ENCODE measurements at regions of chr9 and their contacts with region 1.

Region 1: GRCh38 chr9:120767456-120768167 is 25.6 kb downstream of the FBXW2 start:
- DNase-seq: peak; percentile 11
- ATAC-seq: no peak
- H3K4me3 ChIP-seq: no peak overlapping the region
- H3K27ac ChIP-seq: peak overlapping the region; percentile 25
- H3K4me1 ChIP-seq: peaks cover 48% of the 10 kb centered on the region
- H3K27me3 ChIP-seq: no peaks in the 10 kb centered on the region
- CTCF ChIP-seq: no peak
- EP300 ChIP-seq: no peak
- POLR2A ChIP-seq: no peak
- RAD21 ChIP-seq: no peak

Region 2: DNA sequence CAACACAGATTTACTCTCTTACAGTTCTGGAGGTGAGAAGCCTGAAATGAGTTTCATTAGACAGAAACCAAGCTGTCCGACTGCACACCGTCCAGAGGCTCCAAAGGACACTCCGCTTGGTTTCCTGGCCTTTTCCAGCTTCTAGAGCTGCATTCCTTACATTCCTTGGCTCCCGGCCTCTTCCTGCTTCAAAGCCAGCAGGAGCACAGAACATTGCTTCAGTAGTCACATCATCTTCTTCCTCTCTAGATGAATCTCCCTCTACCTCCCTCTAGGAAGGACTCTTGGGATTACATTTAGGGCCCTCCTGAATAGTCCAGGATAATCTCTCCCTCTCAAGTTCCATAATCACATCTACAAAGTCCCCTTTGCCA is 401.0 kb before region 1 on chr9:
- CTCF ChIA-PET with region 1: no interaction called
- POLR2A ChIA-PET with region 1: no interaction called
- in situ Hi-C with region 1: no loop called
- intact Hi-C with region 1: no loop called
- DNase-seq: peak; percentile 88
- ATAC-seq: peak; percentile 96
- H3K4me3 ChIP-seq: peak overlapping the region; percentile 3 to 27 (median 5); a peak in 1 of 6 replicates
- H3K27ac ChIP-seq: peak overlapping the region; percentile 47
- H3K4me1 ChIP-seq: peaks cover 29% of the 10 kb centered on the region
- H3K27me3 ChIP-seq: no peaks in the 10 kb centered on the region
- CTCF ChIP-seq: peak; percentile 35; the same call in 1 of the 2 replicates
- EP300 ChIP-seq: peak in 1 of 2 experiments; percentile 52; a peak in 2 of 4 replicates
- POLR2A ChIP-seq: peak in 1 of 2 experiments; percentile 41; a peak in 1 of 4 replicates
- RAD21 ChIP-seq: peak; percentile 38

Region 3: DNA sequence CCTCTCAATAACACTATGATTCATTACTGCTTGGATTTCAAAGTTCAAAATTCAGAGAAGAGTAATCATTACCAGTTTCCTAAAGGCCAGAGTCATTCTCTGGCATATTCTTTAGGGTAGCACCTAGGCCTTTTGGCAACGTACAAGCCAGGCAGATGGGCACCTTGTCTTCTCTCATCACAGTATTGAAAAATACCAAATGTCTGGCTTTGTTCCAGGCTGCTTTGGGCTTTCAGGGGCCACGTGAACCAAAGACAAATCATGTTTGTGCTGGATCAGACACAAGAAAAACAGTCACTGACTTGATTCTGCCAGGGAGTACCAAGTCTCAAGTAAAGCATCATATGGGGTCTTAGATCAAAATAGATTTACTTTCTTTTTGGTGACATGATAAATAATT is 68.8 kb before region 1 on chr9:
- CTCF ChIA-PET with region 1: no interaction called
- POLR2A ChIA-PET with region 1: no interaction called
- in situ Hi-C with region 1: no loop called
- intact Hi-C with region 1: no loop called
- DNase-seq: no peak
- ATAC-seq: no peak
- H3K4me3 ChIP-seq: no peak overlapping the region
- H3K27ac ChIP-seq: no peak overlapping the region
- H3K4me1 ChIP-seq: peaks cover 37% of the 10 kb centered on the region
- H3K27me3 ChIP-seq: no peaks in the 10 kb centered on the region
- CTCF ChIP-seq: no peak
- EP300 ChIP-seq: no peak
- POLR2A ChIP-seq: no peak
- RAD21 ChIP-seq: no peak

Region 4: GRCh38 chr9:120783602-120784047 is 16.0 kb after region 1 on chr9:
- CTCF ChIA-PET with region 1: no interaction called
- POLR2A ChIA-PET with region 1: interaction called, 76 read pairs
- in situ Hi-C with region 1: no loop called
- intact Hi-C with region 1: no loop called
- DNase-seq: peak; percentile 87
- ATAC-seq: peak; percentile 67
- H3K4me3 ChIP-seq: no peak overlapping the region
- H3K27ac ChIP-seq: peak overlapping the region; percentile 72
- H3K4me1 ChIP-seq: peaks cover 73% of the 10 kb centered on the region
- H3K27me3 ChIP-seq: no peaks in the 10 kb centered on the region
- CTCF ChIP-seq: no peak
- EP300 ChIP-seq: no peak; a peak in 2 of 4 replicates
- POLR2A ChIP-seq: no peak
- RAD21 ChIP-seq: no peak

Region 5: DNA sequence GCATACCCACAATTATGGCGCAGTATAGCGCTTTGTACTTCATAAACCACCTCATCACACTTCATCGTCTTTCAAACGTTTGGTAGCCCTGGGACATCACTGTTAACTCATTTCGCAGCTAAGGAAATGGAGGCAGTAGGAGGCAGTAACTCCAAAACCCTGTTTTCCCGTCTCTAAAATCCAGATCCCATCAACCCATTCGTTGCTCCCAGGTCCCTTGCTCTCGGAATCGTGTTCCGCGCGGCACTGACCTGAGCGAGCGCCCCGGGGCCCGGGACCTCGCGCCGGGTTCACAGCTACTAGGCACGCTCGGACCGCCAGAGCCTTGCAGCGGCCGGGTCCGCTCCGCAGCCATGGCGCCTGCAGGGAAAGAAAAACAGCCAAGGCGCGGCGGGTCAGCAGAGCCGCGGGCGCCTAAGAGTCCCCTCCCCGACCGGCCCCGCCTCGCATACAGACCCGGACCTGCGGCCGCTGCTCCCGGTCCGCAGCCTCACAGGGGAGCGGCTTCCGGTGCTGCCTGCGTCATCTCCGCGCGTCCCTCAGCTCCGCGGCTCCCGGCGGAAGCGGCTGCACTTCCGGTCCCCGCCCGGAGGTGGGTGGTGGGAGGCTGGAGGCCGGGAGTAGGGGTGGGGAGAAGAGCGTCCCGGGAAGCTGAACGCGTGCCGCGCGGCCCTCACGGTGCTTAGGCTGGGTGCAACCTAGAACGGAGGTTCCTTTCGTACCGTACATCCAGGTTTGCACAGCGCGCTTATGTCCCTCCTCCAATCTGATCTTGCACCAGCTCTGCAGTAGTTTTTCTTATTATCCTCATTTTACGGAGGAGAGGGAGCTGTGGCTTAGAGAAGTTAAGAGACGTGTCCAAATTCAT is 25.5 kb after region 1 on chr9 and contains the start of gene FBXW2:
- CTCF ChIA-PET with region 1: no interaction called
- POLR2A ChIA-PET with region 1: interaction called, 52 read pairs
- in situ Hi-C with region 1: no loop called
- intact Hi-C with region 1: no loop called
- DNase-seq: peak; percentile 87
- ATAC-seq: peak; percentile 98
- H3K4me3 ChIP-seq: peak within 1 kb of the TSS; percentile 81 to 87 (median 84)
- H3K27ac ChIP-seq: peak within 1 kb of the TSS; percentile 90
- H3K4me1 ChIP-seq: peaks cover 53% of the 10 kb centered on the region
- H3K27me3 ChIP-seq: no peaks in the 10 kb centered on the region; a peak in 1 of 5 replicates
- CTCF ChIP-seq: peak; percentile 23; the same call in 1 of the 2 replicates
- EP300 ChIP-seq: no peak
- POLR2A ChIP-seq: peak; percentile 95 to 97
- RAD21 ChIP-seq: peak; percentile 63
- total RNA-seq, gene FBXW2: 43.1 and 55.2 TPM in 2 replicates

Region 6: DNA sequence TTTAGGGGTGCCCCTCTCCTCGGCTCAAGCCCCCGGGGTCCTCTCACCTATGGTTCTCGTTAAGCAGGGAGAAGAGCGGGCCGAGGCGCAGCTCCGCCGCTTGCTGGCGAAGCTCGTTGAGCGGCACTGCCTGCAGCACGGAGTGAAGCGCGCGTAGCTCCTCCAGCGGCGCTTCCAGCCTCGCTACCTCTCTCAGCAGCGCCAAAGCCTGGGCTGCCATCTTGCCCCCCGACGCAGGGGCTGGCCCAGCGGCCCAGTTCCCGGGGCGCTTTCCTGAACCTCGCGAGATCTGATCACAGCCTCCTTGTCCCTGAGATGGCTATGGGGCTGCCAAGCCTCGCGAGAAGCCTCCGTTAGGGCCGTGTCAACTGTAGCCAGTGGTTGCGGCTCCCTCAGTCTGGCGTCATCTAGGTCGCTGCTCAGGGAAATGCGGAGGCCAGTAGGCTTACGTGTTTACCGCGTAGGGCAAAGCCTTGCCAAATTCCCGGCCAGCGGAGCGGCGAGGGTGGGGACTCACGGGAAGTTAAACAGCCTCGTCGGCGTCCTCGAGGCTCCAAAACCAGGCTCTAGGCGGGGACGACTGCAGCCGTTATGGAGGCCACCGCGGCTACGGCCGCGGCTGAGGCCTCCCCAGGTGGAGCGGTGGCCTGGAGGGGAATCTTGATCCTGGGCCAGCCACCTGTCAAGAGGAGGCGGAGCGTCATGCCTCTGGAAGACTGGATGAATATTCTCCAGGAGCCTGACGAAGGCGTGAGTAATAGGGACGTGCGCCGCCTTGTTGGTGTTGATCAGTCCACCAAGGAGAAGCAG is 75.3 kb after region 1 on chr9 and contains the start of gene PSMD5:
- CTCF ChIA-PET with region 1: no interaction called
- POLR2A ChIA-PET with region 1: interaction called, 3 read pairs
- in situ Hi-C with region 1: no loop called
- intact Hi-C with region 1: loop called (anchors 2 kb)
- DNase-seq: peak; percentile 94
- ATAC-seq: peak; percentile 96
- H3K4me3 ChIP-seq: peak within 1 kb of the TSS; percentile 73 to 91 (median 87)
- H3K27ac ChIP-seq: peak within 1 kb of the TSS; percentile 82
- H3K4me1 ChIP-seq: peaks cover 30% of the 10 kb centered on the region
- H3K27me3 ChIP-seq: peaks cover 0 to 3% of the 10 kb centered on the region in 2 experiments; a peak in 1 of 5 replicates
- CTCF ChIP-seq: peak; percentile 48
- EP300 ChIP-seq: no peak
- POLR2A ChIP-seq: peak; percentile 86 to 89
- RAD21 ChIP-seq: peak; percentile 8; the same call in 1 of the 2 replicates
- total RNA-seq, gene PSMD5: 18.1 and 32.6 TPM in 2 replicates

Region 7: GRCh38 chr9:121447321-121447834 is 679.8 kb after region 1 on chr9:
- CTCF ChIA-PET with region 1: no interaction called
- POLR2A ChIA-PET with region 1: no interaction called
- in situ Hi-C with region 1: no loop called
- intact Hi-C with region 1: no loop called
- DNase-seq: no peak
- ATAC-seq: no peak
- H3K4me3 ChIP-seq: no peak overlapping the region
- H3K27ac ChIP-seq: no peak overlapping the region
- H3K4me1 ChIP-seq: no peaks in the 10 kb centered on the region
- H3K27me3 ChIP-seq: peaks cover 0 to 35% of the 10 kb centered on the region in 2 experiments; a peak in 1 of 5 replicates
- CTCF ChIP-seq: no peak
- EP300 ChIP-seq: no peak
- POLR2A ChIP-seq: no peak
- RAD21 ChIP-seq: no peak